Activated naive CD4-positive, alpha-beta T cell treated with anti-CD3 and anti-CD28 coated beads for 36 hours (primary cell): ENCODE measurements at regions of chr12 and their contacts with region 1.

Region 1: GRCh38 chr12:122123051-122123760 is 44.6 kb downstream of the MLXIP start:
- DNase-seq: peak; percentile 82
- H3K4me3 Mint-ChIP-seq: no peak overlapping the region
- H3K27ac Mint-ChIP-seq: peak overlapping the region; percentile 47
- H3K4me1 Mint-ChIP-seq: peaks cover 40% of the 10 kb centered on the region
- H3K27me3 Mint-ChIP-seq: no peaks in the 10 kb centered on the region

Region 2: GRCh38 chr12:121980191-121980891 is 142.9 kb before region 1 on chr12:
- CTCF ChIA-PET with region 1: no interaction called
- intact Hi-C with region 1: no loop called
- DNase-seq: no peak
- H3K4me3 Mint-ChIP-seq: no peak overlapping the region
- H3K27ac Mint-ChIP-seq: no peak overlapping the region
- H3K4me1 Mint-ChIP-seq: peaks cover 8% of the 10 kb centered on the region
- H3K27me3 Mint-ChIP-seq: no peaks in the 10 kb centered on the region

Region 3: DNA sequence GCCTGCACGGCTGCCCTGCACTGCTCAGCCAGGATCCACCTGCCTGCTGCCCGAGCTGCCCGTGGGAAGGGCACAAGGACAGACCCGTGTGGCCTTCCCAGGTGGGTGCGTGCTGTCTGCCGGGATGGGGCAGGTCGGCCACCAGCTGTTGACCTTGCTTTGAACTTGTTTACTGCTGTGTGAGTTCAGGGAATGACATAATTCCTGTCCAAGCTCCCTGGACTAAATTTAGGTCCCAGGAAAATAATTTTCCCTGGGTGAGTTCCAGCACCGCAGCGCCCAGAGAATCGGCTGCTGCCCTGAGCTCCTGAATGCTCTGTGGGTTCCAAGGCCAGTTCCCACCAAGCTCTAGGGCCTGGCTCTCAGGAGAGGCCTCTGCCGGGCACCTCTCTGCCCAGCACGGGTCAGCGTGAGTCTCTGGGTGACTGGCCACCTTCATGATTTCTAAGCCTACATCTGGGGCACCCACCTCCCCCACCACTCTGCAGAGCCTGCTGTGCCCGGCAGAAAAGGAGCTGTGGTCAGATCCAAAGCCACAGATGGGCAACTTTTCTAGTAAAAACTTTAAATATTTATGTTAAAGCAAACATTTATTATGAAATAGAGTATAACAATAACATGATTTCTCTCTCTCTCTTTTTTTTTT is 71.9 kb before region 1 on chr12:
- CTCF ChIA-PET with region 1: interaction called, 78 read pairs
- intact Hi-C with region 1: loop called (anchors 1 kb)
- DNase-seq: no peak
- H3K4me3 Mint-ChIP-seq: no peak overlapping the region
- H3K27ac Mint-ChIP-seq: no peak overlapping the region
- H3K4me1 Mint-ChIP-seq: peaks cover 3% of the 10 kb centered on the region
- H3K27me3 Mint-ChIP-seq: no peaks in the 10 kb centered on the region

Region 4: GRCh38 chr12:122078141-122079032 is 44.8 kb before region 1 on chr12 and contains the start of gene MLXIP:
- CTCF ChIA-PET with region 1: interaction called, 14 read pairs
- intact Hi-C with region 1: loop called (anchors 1 kb)
- DNase-seq: peak; percentile 91
- H3K4me3 Mint-ChIP-seq: peak within 1 kb of the TSS; percentile 85
- H3K27ac Mint-ChIP-seq: peak within 1 kb of the TSS; percentile 51
- H3K4me1 Mint-ChIP-seq: peaks cover 47% of the 10 kb centered on the region
- H3K27me3 Mint-ChIP-seq: no peaks in the 10 kb centered on the region
- total RNA-seq, gene MLXIP: 18.8 to 22.0 TPM

Region 5: DNA sequence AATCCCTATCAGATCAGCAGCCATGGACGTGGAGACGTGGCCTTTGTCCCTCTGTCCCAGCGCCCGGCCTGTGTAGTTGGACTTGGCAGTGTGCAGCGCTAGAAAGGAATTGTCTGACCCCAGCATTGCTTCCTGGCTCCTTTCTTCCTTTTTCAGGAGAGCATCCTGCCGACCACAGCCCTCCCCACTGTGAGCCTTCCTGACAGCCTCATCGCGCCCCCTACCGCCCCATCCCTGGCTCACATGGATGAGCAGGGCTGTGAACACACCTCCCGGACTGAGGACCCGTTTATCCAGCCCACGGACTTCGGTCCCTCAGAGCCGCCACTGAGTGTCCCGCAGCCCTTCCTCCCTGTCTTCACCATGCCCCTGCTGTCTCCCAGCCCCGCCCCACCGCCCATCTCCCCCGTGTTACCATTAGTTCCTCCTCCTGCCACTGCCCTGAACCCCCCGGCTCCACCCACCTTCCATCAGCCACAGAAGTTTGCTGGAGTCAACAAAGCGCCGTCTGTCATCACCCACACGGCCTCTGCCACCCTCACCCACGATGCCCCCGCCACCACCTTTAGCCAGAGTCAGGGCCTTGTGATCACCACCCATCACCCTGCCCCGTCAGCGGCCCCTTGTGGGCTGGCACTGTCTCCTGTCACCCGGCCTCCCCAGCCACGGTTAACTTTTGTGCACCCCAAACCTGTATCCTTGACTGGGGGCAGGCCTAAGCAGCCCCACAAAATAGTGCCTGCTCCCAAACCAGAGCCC is 10.2 kb after region 1 on chr12:
- CTCF ChIA-PET with region 1: interaction called, 11 read pairs
- intact Hi-C with region 1: no loop called
- DNase-seq: no peak
- H3K4me3 Mint-ChIP-seq: no peak overlapping the region
- H3K27ac Mint-ChIP-seq: no peak overlapping the region
- H3K4me1 Mint-ChIP-seq: no peaks in the 10 kb centered on the region
- H3K27me3 Mint-ChIP-seq: no peaks in the 10 kb centered on the region